Ovary (tissue), 10 donors: ENCODE measurements at regions of chr1 and their contacts with region 1.

Region 1: GRCh38 chr1:85109475-85109874 is 61.2 kb upstream of the MCOLN3 start:
- DNase-seq: peak; percentile 36 to 58 (median 48)
- H3K4me3 ChIP-seq: no peak overlapping the region
- H3K27ac ChIP-seq: no peak overlapping the region
- H3K4me1 ChIP-seq: no peaks in the 10 kb centered on the region
- H3K27me3 ChIP-seq: no peaks in the 10 kb centered on the region
- CTCF ChIP-seq: peak; percentile 27 to 55 (median 31)
- EP300 ChIP-seq: no peak
- POLR2A ChIP-seq: no peak

Region 2: DNA sequence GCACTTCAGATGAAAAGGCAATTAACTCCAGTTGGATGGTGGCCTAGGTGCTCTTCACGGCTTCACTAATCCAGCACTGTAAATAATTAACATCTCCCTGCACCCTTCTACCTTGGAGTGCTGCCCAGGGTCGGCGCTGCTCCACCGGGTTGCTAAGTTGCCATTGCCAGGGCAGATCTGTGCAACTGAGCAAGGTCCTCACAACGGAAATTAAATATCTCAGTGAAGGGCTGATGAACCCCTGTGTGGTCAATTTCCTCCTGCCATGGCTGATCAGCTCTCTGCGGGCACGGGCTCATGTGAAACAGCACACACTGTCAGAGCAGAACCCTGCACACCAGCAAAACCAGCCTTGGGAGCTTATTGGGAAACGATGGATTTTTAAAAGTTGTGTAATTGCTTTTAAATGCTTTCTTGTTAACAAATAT is 28.2 kb after region 1 on chr1:
- intact Hi-C with region 1: no loop called
- DNase-seq: peak in 2 of 5 donors; percentile 19 to 37
- H3K4me3 ChIP-seq: no peak overlapping the region
- H3K27ac ChIP-seq: no peak overlapping the region
- H3K4me1 ChIP-seq: no peaks in the 10 kb centered on the region
- H3K27me3 ChIP-seq: no peaks in the 10 kb centered on the region
- CTCF ChIP-seq: no peak
- EP300 ChIP-seq: no peak
- POLR2A ChIP-seq: no peak

Region 3: DNA sequence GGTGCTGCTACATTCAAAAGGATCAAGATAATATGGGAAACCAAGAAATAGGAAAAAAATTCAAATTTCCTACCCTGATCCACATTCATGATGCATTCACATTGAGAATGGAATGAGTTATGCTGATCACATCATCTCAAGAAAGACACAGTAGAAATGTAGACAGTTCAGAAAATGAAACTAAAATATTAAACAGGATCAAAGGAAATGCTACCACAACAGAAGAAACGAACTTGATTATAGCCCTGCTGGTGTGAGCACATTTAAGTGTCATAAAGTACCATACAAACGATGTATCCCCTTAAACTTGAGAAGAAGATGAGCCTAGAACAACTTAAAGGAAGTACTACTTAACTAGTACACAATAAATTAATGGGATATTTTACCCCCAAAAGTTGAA is 70.0 kb after region 1 on chr1:
- intact Hi-C with region 1: no loop called
- DNase-seq: no peak
- H3K4me3 ChIP-seq: no peak overlapping the region
- H3K27ac ChIP-seq: no peak overlapping the region
- H3K4me1 ChIP-seq: no peaks in the 10 kb centered on the region
- H3K27me3 ChIP-seq: no peaks in the 10 kb centered on the region
- CTCF ChIP-seq: no peak
- EP300 ChIP-seq: no peak
- POLR2A ChIP-seq: no peak

Region 4: GRCh38 chr1:85240174-85240601 is 130.7 kb after region 1 on chr1:
- intact Hi-C with region 1: loop called in 1 of 4 experiments (anchors 5 kb)
- DNase-seq: no peak
- H3K4me3 ChIP-seq: no peak overlapping the region
- H3K27ac ChIP-seq: no peak overlapping the region
- H3K4me1 ChIP-seq: peaks cover 1% of the 10 kb centered on the region
- H3K27me3 ChIP-seq: no peaks in the 10 kb centered on the region
- CTCF ChIP-seq: no peak
- EP300 ChIP-seq: no peak
- POLR2A ChIP-seq: no peak

Region 5: GRCh38 chr1:85259118-85259911 is 149.8 kb after region 1 on chr1 and contains the start of gene C1orf52:
- intact Hi-C with region 1: loop called in 3 of 4 experiments (anchors 5 to 10 kb)
- DNase-seq: peak; percentile 94 to 99 (median 97)
- H3K4me3 ChIP-seq: peak within 1 kb of the TSS; percentile 94
- H3K27ac ChIP-seq: peak within 1 kb of the TSS in 1 of 2 donors; percentile 1
- H3K4me1 ChIP-seq: peaks cover 6% of the 10 kb centered on the region
- H3K27me3 ChIP-seq: no peaks in the 10 kb centered on the region
- CTCF ChIP-seq: peak; percentile 94 to 100 (median 96)
- EP300 ChIP-seq: no peak
- POLR2A ChIP-seq: peak; percentile 54
- total RNA-seq, gene C1orf52: 10.7 to 24.6 (median 18.8) TPM

Region 6: DNA sequence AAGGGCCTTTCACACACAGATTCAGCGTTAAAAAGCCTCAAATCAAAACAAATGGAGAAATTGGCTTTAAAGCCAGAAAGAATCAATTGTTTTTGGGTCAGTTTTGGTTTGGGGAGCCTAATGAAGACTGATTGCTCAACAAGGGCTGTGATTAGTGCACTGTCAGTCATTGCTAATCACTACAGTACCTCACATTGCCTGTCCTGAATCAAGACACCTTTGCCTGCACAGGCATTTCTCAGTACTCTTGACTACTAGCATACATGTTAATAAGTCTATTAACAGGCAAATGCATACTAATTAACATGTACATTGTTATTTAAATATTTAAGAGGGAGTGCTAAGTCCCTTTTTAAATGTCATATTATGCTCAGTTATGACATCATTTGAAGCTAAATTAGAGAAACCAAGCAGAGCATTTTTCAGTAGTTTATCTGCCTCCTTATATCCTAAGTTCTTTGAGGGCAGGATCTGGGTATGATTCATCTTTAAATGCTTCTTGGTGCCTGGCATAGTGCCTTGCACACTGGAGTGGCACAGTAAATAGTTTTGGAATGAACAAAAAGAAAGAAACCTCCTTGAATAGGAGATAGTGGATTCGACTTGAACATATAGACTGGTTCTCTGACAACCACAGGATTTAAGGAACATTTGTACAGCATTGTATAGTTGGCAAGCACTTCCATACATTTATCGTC is 445.3 kb after region 1 on chr1:
- intact Hi-C with region 1: no loop called
- DNase-seq: no peak
- H3K4me3 ChIP-seq: no peak overlapping the region
- H3K27ac ChIP-seq: no peak overlapping the region
- H3K4me1 ChIP-seq: peaks cover 1% of the 10 kb centered on the region
- H3K27me3 ChIP-seq: no peaks in the 10 kb centered on the region
- CTCF ChIP-seq: no peak
- EP300 ChIP-seq: no peak
- POLR2A ChIP-seq: no peak